ENCODE measurements at regions of chr1 and their contacts with region 1.

Region 1: DNA sequence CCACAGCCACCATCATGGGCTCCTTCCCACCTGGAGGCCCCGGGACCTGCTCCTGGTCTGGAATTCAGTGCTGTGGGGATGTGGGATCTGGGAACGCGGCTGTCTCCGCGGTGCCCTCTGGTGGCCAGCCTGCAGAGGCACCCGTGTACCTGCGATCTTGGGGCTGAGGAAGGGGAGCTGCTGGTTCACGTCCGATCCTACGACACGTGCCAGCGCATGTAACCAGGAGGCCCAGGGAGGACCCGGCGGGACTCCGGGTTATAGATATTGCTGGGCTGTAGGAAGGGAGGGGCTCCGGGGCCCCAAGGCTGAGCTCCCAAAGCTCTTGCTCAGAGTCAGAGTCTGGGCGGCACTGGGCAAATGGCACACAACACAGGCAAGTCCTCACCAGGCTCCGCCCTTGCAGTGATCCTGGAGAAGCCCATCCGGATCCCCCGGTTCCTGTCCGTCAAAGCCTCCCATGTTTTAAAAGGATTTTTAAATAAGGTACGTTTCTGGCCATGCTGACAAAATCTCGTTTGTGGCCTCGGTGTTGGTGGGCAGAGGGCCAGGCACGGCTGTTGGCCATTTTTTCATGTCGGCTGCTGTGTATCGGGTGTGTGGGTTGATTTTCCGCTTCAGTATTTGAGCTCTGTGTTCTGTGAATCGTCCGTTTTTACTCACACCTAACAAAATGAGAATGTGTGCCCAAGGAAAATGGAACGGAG is 20.1 kb downstream of the FAAP20 start:
- DNase-seq: peak; percentile 84
- ATAC-seq: peak; percentile 88
- H3K4me3 Mint-ChIP-seq: no peak overlapping the region
- H3K27ac Mint-ChIP-seq: peak overlapping the region; percentile 88
- H3K4me1 Mint-ChIP-seq: 0 out of 2 replicates have a peak, but pooled peaks cover 3% of the 10 kb centered on the region
- H3K27me3 Mint-ChIP-seq: no peaks in the 10 kb centered on the region
- CTCF ChIP-seq: peak; percentile 85

Region 2: GRCh38 chr1:2091611-2092604 is 82.6 kb before region 1 on chr1:
- CTCF ChIA-PET with region 1: interaction called, 16 read pairs
- POLR2A ChIA-PET with region 1: no interaction called
- DNase-seq: peak; percentile 83
- ATAC-seq: peak; percentile 83
- H3K4me3 Mint-ChIP-seq: no peak overlapping the region
- H3K27ac Mint-ChIP-seq: peak overlapping the region; percentile 88
- H3K4me1 Mint-ChIP-seq: peaks cover 8% of the 10 kb centered on the region
- H3K27me3 Mint-ChIP-seq: no peaks in the 10 kb centered on the region
- CTCF ChIP-seq: no peak; the same call in none of the 2 replicates

Region 3: GRCh38 chr1:2115681-2116341 is 58.7 kb before region 1 on chr1:
- CTCF ChIA-PET with region 1: interaction called, 27 read pairs
- POLR2A ChIA-PET with region 1: no interaction called
- DNase-seq: peak; percentile 72
- ATAC-seq: peak; percentile 94
- H3K4me3 Mint-ChIP-seq: peak overlapping the region; percentile 55
- H3K27ac Mint-ChIP-seq: peak overlapping the region; percentile 82
- H3K4me1 Mint-ChIP-seq: peaks cover 30% of the 10 kb centered on the region
- H3K27me3 Mint-ChIP-seq: no peaks in the 10 kb centered on the region
- CTCF ChIP-seq: no peak

Region 4: DNA sequence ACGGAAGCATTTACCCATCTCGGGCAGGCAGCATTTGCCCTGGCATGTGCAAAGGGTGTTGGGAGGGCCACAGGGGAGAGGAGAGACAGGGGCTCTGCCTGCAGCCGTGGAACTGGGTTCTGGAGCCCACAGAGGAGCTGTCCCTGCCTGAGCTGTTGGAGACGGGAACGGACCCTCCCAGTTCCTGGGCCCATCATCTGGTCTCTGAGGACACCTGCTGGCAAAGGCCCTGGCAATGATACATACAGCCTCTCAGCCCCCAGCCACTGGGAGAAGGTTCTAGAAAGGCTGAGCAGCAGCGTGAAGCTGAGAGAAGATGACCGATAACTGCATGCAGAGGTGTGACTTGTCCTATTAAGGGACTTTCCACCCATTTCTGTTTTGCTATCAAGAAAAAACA is 11.3 kb before region 1 on chr1:
- CTCF ChIA-PET with region 1: interaction called, 39 read pairs
- POLR2A ChIA-PET with region 1: no interaction called
- DNase-seq: no peak
- ATAC-seq: no peak
- H3K4me3 Mint-ChIP-seq: no peak overlapping the region
- H3K27ac Mint-ChIP-seq: peak overlapping the region; percentile 43; the same call in 1 of the 2 replicates
- H3K4me1 Mint-ChIP-seq: no peaks in the 10 kb centered on the region
- H3K27me3 Mint-ChIP-seq: no peaks in the 10 kb centered on the region
- CTCF ChIP-seq: no peak

Region 5: DNA sequence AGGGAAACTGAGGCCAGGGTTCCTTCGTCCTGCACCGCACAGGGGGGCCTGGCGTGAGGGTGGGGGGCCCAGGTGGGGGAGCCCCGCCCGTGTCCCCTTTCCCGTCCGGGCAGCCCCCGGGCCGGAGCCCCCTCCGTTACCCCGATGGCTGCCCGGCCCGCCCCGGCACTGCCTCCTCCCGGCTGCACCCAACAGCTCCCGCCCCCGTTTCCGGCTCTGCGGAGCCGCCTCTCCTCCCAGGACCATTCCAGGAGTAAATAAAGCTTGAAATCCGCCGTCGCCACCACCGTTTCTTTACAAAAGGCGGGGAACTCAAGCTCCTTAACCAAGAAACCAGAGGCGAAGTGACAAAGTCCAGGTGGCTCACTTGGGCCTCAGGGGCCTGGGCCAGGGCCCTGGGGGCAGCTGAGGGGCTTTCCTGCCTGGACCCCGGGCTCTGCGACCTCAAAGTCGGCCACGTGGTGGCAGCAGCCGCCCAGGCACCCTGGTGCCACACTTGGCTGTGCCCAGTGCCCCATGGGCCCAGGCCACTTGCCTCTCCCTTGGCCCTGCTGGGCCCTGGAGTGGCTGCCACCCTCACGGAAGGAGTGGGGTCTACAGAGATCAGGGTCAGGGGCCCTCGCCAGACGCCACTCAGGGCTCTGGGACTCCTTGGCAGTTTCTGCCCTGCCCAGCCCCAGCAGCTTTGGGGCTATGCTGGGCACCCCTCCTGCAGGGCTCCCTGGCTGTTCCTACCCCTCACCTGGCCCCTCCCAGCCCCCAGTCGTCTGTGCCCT is 20.6 kb after region 1 on chr1:
- CTCF ChIA-PET with region 1: interaction called, 27 read pairs
- POLR2A ChIA-PET with region 1: interaction called, 3 read pairs
- DNase-seq: peak; percentile 92
- ATAC-seq: peak; percentile 73
- H3K4me3 Mint-ChIP-seq: peak overlapping the region; percentile 79
- H3K27ac Mint-ChIP-seq: peak overlapping the region; percentile 80; the same call in 1 of the 2 replicates
- H3K4me1 Mint-ChIP-seq: peaks cover 14% of the 10 kb centered on the region
- H3K27me3 Mint-ChIP-seq: no peaks in the 10 kb centered on the region; the same call in 1 of the 2 replicates
- CTCF ChIP-seq: peak; percentile 47; the same call in 1 of the 2 replicates

Measured in WTC11 (cell line).